ENCODE measurements at regions of chr16 and their contacts with region 1.

Region 1: DNA sequence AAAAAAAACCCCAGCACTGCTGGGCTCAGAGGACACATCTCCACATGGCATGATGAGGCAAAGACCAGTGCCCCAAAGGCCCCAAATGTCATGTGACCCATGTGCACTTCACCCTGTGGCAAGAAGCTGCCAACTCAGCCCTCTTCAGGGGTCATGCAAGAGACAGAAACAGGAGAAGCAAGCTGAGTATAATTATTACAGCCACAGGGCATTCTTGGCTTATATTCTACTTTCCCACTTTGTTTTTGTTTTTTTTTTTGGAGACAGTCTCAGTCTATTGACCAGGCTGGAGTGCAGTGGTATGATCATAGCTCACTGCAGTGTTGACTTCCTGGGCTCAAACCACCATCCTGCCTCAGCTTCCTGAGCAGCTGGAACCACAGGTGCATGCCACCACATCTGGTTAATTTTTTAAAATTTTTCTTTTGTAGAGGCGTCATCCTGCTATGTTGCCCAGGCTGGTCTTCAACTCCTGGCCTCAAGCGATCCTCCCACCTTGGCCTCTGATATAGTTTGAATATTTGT is 32.7 kb upstream of the LITAF start:
- DNase-seq: peak; percentile 93
- H3K4me3 ChIP-seq: peak overlapping the region; percentile 17
- H3K27ac ChIP-seq: peak overlapping the region; percentile 99
- H3K4me1 ChIP-seq: peaks cover 71% of the 10 kb centered on the region
- CTCF ChIP-seq: no peak

Region 2: DNA sequence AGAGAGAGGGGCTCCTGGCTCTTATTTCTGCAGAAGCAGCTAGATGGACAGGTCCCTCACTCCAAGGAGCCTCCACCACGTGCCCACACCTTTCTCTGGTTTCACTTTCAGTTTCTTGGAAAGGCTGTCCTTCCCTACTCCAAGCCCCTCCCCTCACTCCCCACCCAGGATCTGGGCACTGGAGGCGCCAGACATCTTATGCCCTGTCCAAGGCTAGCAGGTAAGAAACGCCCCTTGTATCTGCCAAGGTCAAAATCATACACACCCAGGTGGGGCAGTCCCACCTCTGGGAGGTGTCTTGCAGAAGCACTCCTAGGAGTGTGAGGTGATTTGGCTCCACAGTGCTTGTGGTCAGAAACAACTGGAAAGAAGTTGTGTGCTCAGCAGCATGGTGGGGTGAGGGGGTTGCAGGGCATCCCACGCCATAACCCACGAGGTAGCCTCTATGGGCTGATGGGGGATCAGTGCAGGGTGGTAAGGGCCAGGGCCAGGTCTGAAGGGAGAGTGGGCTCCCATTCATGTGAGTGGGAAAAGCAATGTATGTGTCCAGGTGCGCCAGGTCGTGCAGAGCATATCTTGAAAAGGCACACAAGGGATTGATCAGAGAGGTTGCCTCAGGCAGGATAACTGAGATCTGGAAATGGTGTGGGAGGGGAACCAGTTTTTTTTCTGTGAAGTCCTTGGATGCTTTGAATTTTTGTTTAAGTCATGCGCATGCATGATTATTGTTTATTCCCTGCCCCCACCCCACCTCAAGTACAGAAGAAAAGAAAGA is 306.5 kb before region 1 on chr16:
- CTCF ChIA-PET with region 1: no interaction called
- POLR2A ChIA-PET with region 1: no interaction called
- intact Hi-C with region 1: loop called (anchors 5 kb)
- DNase-seq: no peak
- H3K4me3 ChIP-seq: no peak overlapping the region
- H3K27ac ChIP-seq: peak overlapping the region; percentile 99
- H3K4me1 ChIP-seq: peaks cover 79% of the 10 kb centered on the region
- CTCF ChIP-seq: no peak

Region 3: GRCh38 chr16:11586856-11587642 is 32.3 kb before region 1 on chr16 and contains the start of gene LITAF:
- CTCF ChIA-PET with region 1: no interaction called
- POLR2A ChIA-PET with region 1: interaction called, 8 read pairs
- intact Hi-C with region 1: loop called (anchors 2 kb)
- DNase-seq: peak; percentile 55
- H3K4me3 ChIP-seq: peak within 1 kb of the TSS; percentile 70
- H3K27ac ChIP-seq: no peak within 1 kb of the TSS
- H3K4me1 ChIP-seq: peaks cover 55% of the 10 kb centered on the region
- CTCF ChIP-seq: 0 out of 2 replicates have a peak, but pooled peaks have one; percentile 34
- total RNA-seq, gene LITAF: 12.2 and 18.4 TPM in 2 replicates

Region 4: DNA sequence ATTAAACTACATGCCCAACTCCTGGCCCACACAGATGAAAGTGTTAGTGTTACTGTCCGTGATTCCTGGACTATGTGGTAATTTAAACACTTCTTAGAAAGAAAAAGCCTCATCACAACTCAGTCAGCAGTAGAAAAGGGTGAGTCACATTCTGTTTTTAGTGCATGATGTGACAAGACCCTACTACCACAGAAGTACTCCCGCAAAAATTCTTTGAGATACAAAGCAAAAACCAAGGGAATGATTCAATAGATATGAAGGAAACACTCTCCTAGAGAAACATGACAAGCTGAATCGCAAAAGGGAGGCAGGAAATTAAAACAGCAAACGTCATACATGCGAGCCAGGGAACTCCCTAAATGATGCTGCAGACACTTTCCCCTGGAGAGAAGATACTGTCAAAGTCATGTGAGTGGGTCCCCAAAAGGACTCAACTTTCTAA is 63.3 kb after region 1 on chr16:
- CTCF ChIA-PET with region 1: no interaction called
- POLR2A ChIA-PET with region 1: interaction called, 5 read pairs
- intact Hi-C with region 1: loop called (anchors 1 kb)
- DNase-seq: no peak
- H3K4me3 ChIP-seq: peak overlapping the region; percentile 59
- H3K27ac ChIP-seq: peak overlapping the region; percentile 98
- H3K4me1 ChIP-seq: peaks cover 100% of the 10 kb centered on the region
- CTCF ChIP-seq: no peak

Measured in OCI-LY7 (cell line).